T-cell (primary cell): ENCODE measurements at regions of chr4 and their contacts with region 1.

Region 1: DNA sequence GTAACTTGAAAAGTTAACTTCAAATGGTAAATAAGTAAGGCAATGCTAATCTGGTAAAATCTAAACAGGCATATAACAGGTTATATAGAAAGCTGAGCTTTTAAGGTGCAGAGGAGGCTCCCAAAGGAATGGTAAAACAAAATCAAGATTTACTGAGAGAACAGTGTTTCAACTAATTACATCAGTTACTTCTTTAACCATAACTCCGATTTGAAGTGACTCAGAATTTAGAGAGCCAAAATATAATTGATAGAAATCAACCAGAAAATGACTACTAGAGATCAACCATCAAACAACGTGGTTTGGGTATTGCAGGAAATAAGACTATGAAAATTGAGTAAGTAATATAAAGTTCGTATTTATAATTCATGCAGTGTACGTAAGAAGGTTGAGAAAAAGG is 6.9 kb downstream of the G3BP2 start:
- DNase-seq: no peak
- ATAC-seq: peak in 2 of 4 experiments; percentile 20 to 39
- H3K4me3 ChIP-seq: no peak overlapping the region
- H3K4me3 Mint-ChIP-seq: peak overlapping the region; percentile 62 to 100 (median 70)
- H3K27ac ChIP-seq: no peak overlapping the region
- H3K27ac Mint-ChIP-seq: peak overlapping the region; percentile 23 to 52
- H3K4me1 ChIP-seq: peaks cover 34 to 36% of the 10 kb centered on the region in 2 experiments
- H3K4me1 Mint-ChIP-seq: peaks cover 81 to 85% (median 84%) of the 10 kb centered on the region in 3 donors
- H3K27me3 ChIP-seq: no peaks in the 10 kb centered on the region
- H3K27me3 Mint-ChIP-seq: no peaks in the 10 kb centered on the region

Region 2: GRCh38 chr4:75653845-75654503 is 12.3 kb before region 1 on chr4:
- CTCF ChIA-PET with region 1: interaction called, 3 to 11 read pairs
- POLR2A ChIA-PET with region 1: interaction called, 9 to 26 read pairs
- DNase-seq: peak in 1 of 35 experiments; percentile 36
- ATAC-seq: no peak
- H3K4me3 ChIP-seq: no peak overlapping the region
- H3K4me3 Mint-ChIP-seq: peak overlapping the region in 2 of 3 donors; percentile 15 to 35
- H3K27ac ChIP-seq: peak overlapping the region; percentile 79
- H3K27ac Mint-ChIP-seq: peak overlapping the region; percentile 73 to 81
- H3K4me1 ChIP-seq: peaks cover 5 to 39% of the 10 kb centered on the region in 2 experiments
- H3K4me1 Mint-ChIP-seq: peaks cover 51 to 64% (median 53%) of the 10 kb centered on the region in 3 donors
- H3K27me3 ChIP-seq: no peaks in the 10 kb centered on the region
- H3K27me3 Mint-ChIP-seq: no peaks in the 10 kb centered on the region